ENCODE measurements at regions of chr14 and their contacts with region 1.

Region 1: GRCh38 chr14:35229495-35230089 is 62.6 kb upstream of the PSMA6 start:
- DNase-seq: peak; percentile 39
- CTCF ChIP-seq: peak; percentile 17

Region 2: DNA sequence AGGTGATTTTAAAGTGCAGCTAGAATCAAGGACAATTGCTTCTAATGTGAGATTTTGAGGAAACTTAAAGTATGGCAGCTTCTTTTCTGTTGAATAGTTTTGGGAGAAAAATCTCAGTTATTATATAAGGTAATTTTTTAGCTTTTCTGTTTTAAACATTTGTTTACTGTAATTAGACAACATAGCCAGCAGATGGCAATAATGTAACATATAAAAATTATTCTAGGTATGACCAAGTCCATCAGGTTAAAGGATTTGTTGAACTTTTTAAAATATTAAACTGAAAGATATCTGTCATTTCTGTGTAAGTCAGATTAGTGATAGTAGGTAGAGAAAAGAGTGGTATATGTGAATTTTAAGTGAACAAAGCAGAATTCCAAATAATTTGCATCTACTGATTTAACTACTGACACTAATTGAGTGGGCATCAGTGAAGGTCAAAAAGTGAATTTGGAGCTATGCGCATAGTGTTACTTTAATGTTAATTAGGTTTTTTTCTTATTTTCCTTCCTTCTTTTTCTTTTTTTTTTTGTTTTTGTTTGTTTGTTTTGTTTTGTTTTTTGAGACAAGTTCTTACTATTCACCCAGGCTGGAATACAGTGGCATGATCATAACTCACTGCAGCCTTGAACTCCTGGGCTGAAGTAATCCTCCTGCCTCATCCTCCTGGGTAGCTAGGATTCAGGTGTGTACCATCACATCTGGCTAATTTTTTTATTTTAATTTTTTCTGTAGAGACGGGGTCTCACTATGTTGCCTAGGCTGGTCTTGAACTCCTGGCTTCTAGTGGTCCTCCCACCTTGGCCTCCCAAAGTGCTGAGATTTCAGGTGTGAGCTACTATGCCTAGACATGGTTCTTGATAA is 88.6 kb before region 1 on chr14:
- CTCF ChIA-PET with region 1: interaction called, 10 read pairs
- POLR2A ChIA-PET with region 1: no interaction called
- DNase-seq: no peak
- CTCF ChIP-seq: peak; percentile 23

Region 3: DNA sequence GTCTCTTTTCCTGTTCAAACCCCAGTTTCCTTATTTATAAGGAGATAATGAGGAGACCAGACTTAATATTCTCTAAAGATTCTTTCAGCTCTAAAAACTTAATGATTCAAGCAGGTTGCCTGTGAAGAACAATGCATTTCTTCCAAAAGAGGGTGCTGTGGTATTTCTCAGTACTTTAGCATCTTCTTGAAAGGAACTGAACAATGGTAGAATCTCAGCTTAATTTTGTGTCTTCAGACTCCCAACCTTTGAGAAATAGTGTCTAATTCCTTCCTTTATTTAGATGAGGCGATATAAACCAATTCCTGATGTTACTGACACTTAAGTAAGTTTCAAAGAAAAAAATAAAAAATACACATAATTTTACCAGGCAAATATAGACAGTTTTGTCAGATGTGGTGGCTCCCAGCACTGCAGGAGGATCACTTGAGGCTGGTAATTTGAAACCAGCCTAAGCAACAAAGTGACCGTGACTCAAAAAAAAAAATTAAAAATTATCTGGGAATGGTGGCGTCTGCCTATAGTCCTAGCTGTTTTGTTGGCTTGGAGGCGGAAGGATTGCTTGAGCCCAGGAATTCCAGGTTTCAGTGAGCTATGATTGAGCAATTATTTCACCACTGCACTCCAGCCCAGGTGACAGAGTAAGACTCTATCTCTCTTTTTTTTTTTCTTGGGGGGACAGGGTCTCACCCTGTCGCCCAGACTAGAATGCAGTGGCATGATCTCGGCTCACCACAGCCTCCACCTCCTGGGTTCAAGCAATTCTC is 14.3 kb before region 1 on chr14:
- CTCF ChIA-PET with region 1: interaction called, 14 read pairs
- POLR2A ChIA-PET with region 1: no interaction called
- DNase-seq: peak; percentile 35
- CTCF ChIP-seq: peak; percentile 58

Region 4: GRCh38 chr14:35240231-35240630 is 10.6 kb after region 1 on chr14:
- CTCF ChIA-PET with region 1: interaction called, 17 read pairs
- POLR2A ChIA-PET with region 1: no interaction called
- DNase-seq: no peak
- CTCF ChIP-seq: no peak

Region 5: GRCh38 chr14:35247777-35248475 is 18.3 kb after region 1 on chr14:
- CTCF ChIA-PET with region 1: interaction called, 15 read pairs
- POLR2A ChIA-PET with region 1: no interaction called
- DNase-seq: no peak
- CTCF ChIP-seq: no peak

Region 6: DNA sequence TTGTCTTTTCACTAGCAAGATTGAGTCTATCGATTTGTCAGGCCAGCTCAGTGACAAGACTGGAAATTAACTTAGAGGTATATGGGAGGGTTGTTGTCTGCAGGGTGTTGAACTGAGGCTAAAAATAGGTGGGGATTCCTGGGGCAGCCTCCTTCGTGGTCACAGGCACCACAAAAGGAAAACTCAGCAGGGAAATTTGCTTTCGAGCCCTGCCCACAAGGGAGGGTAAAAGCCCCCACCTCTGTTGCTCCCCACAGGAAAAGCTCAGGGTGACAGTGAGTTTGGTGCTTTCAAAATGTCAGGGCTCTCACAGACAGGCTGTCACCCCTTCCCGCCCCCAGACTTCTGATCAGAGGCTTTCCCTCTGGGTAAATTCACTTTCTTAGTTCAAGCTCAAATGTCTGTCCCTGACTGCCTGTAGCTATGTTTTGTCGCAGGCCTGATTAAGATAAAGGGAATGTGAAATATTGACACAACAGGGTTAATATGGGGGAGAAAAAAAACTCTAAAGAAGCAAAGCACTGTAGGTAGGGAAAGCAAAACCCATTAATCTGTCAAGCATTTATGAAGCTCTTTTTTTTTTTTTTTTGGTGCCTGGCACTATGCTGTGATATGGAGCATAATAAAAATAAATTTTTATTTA is 186.6 kb after region 1 on chr14:
- CTCF ChIA-PET with region 1: interaction called, 19 read pairs
- POLR2A ChIA-PET with region 1: no interaction called
- DNase-seq: no peak
- CTCF ChIP-seq: no peak